Naive thymus-derived CD4-positive, alpha-beta T cell (primary cell): ENCODE measurements at regions of chr9 and their contacts with region 1.

Region 1: GRCh38 chr9:131773911-131774379 is 34.1 kb upstream of the RAPGEF1 start:
- DNase-seq: peak in 5 of 9 donors; percentile 8 to 36 (median 21)
- ATAC-seq: no peak
- H3K4me3 ChIP-seq: no peak overlapping the region
- H3K4me3 Mint-ChIP-seq: no peak overlapping the region
- H3K27ac ChIP-seq: no peak overlapping the region
- H3K27ac Mint-ChIP-seq: no peak overlapping the region
- H3K4me1 ChIP-seq: no peaks in the 10 kb centered on the region
- H3K4me1 Mint-ChIP-seq: no peaks in the 10 kb centered on the region
- H3K27me3 ChIP-seq: no peaks in the 10 kb centered on the region
- H3K27me3 Mint-ChIP-seq: peaks cover 4 to 27% (median 19%) of the 10 kb centered on the region in 5 donors

Region 2: DNA sequence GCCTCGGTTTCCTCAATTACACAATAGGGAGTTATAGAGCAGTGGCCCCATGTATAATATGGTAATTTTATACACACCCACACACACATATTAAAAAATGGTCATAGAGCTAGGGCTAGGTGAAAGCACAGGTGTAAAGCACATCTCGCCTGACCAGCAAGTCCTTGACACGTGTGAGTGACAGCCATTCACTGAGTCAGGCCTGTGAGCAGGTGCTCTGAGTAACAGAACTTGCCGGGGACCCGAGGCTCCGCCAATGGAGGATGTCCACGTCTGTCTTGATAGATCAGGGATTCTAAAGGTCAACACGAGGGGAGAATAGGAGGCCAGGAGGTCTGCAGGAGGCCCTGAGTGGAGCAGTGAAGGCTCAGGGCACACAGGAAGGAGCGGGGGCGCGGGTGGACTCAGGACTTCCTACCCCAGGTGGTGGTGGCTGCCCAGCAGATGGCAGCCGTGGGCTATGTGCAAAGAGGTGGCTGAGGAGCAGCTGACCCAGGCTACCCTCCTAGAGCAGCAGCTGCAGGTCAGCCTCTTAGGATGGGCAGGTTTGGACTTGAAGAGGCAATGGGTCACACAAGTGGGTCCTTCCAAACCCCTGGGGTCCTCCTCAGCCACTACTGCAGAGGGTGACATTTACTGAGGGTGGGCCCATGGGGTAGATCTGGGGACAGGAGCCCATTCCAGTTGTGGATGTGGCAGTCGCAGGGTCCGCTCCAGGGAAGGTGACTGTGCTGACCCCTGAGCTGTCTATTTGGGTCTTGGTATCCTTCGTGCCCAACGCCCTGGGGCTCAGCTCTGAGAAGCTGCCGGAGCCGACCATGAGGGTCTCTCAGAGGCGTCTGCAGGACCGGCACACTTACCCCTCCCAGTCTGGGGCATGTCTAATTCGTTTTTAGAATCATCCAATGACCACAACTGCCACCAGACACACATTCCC is 182.8 kb before region 1 on chr9:
- CTCF ChIA-PET with region 1: no interaction called
- POLR2A ChIA-PET with region 1: no interaction called
- intact Hi-C with region 1: no loop called
- DNase-seq: peak; percentile 50 to 78 (median 68)
- ATAC-seq: peak; percentile 95
- H3K4me3 ChIP-seq: no peak overlapping the region
- H3K4me3 Mint-ChIP-seq: peak overlapping the region in 2 of 10 donors; percentile 13 to 31
- H3K27ac ChIP-seq: no peak overlapping the region
- H3K27ac Mint-ChIP-seq: peak overlapping the region; percentile 18 to 90 (median 60)
- H3K4me1 ChIP-seq: peaks cover 12 to 19% of the 10 kb centered on the region in 2 donors
- H3K4me1 Mint-ChIP-seq: peaks cover 18 to 36% (median 33%) of the 10 kb centered on the region in 7 donors
- H3K27me3 ChIP-seq: no peaks in the 10 kb centered on the region
- H3K27me3 Mint-ChIP-seq: no peaks in the 10 kb centered on the region

Region 3: DNA sequence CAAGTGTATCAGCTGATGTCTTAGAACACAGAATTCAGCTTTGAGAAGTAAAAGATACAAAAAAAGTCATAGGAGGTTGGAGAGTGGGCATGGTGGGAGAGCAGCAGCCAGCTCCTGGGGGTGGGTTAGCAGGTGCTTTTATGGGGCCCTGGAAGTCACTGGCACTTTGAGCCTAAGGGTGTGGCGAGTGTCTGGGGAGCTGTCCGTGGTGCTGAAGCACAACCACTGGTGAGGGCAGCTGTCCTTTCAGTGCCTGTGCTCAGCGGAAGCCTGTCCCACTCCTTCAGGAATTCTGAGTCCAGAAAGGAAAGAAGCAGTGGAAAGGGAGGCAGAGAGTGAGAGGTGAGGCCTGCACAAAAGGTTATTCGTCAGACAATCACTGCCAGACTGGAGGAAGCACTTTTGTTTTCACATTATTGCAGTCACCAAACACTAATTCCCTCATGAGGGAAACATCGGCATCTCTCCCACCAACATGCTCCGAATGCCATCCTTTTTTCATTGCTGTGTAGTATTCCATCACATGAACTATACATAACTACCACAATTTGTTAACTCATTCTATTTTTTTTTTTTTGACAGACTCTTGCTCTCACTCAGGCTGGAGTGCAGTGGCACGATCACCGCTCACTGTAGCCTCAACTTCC is 25.4 kb after region 1 on chr9:
- CTCF ChIA-PET with region 1: no interaction called
- POLR2A ChIA-PET with region 1: no interaction called
- intact Hi-C with region 1: loop called (anchors 1 to 2 kb)
- DNase-seq: peak in 7 of 9 donors; percentile 26 to 72 (median 33)
- ATAC-seq: no peak
- H3K4me3 ChIP-seq: no peak overlapping the region
- H3K4me3 Mint-ChIP-seq: no peak overlapping the region
- H3K27ac ChIP-seq: no peak overlapping the region
- H3K27ac Mint-ChIP-seq: peak overlapping the region in 1 of 9 donors; percentile 78
- H3K4me1 ChIP-seq: no peaks in the 10 kb centered on the region
- H3K4me1 Mint-ChIP-seq: no peaks in the 10 kb centered on the region
- H3K27me3 ChIP-seq: no peaks in the 10 kb centered on the region
- H3K27me3 Mint-ChIP-seq: peaks cover 7 to 39% (median 35%) of the 10 kb centered on the region in 5 donors